ENCODE measurements at regions of chr5 and their contacts with region 1.

Region 1: GRCh38 chr5:55936100-55936693 is 58.6 kb downstream of the IL6ST start:
- DNase-seq: peak; percentile 86
- ATAC-seq: peak; percentile 79
- H3K4me3 Mint-ChIP-seq: no peak overlapping the region
- H3K27ac Mint-ChIP-seq: no peak overlapping the region
- H3K4me1 Mint-ChIP-seq: no peaks in the 10 kb centered on the region
- H3K27me3 Mint-ChIP-seq: no peaks in the 10 kb centered on the region
- CTCF ChIP-seq: peak; percentile 49; the same call in 1 of the 2 replicates

Region 2: DNA sequence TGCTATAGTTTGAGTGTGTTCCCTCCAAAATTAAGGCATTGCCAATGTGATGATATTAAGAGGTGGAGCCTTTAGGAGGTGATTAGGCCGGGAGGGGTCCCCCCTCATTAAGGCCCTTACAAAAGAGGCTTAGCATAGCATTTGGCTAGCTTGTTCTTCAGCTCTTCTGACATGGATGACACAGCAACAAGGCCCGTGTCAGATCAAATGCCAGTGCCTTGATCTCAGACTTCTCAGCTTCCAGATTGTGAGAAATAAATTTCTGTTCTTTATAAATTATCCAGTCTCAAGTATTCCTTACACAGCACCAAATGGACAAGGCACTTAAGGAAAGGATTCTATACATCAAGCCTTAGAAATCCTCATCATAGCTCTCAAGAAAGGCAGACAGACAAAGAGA is 255.8 kb before region 1 on chr5:
- CTCF ChIA-PET with region 1: no interaction called
- POLR2A ChIA-PET with region 1: no interaction called
- DNase-seq: no peak
- ATAC-seq: no peak
- H3K4me3 Mint-ChIP-seq: no peak overlapping the region
- H3K27ac Mint-ChIP-seq: peak overlapping the region; percentile 21; the same call in 1 of the 2 replicates
- H3K4me1 Mint-ChIP-seq: peaks cover 6% of the 10 kb centered on the region
- H3K27me3 Mint-ChIP-seq: no peaks in the 10 kb centered on the region
- CTCF ChIP-seq: no peak

Region 3: GRCh38 chr5:56200856-56201666 is 264.9 kb after region 1 on chr5:
- CTCF ChIA-PET with region 1: interaction called, 29 read pairs
- POLR2A ChIA-PET with region 1: no interaction called
- DNase-seq: peak; percentile 49
- ATAC-seq: peak; percentile 100
- H3K4me3 Mint-ChIP-seq: no peak overlapping the region
- H3K27ac Mint-ChIP-seq: no peak overlapping the region
- H3K4me1 Mint-ChIP-seq: no peaks in the 10 kb centered on the region
- H3K27me3 Mint-ChIP-seq: no peaks in the 10 kb centered on the region
- CTCF ChIP-seq: peak; percentile 17; the same call in 1 of the 2 replicates

Region 4: GRCh38 chr5:56264417-56265025 is 328.3 kb after region 1 on chr5:
- CTCF ChIA-PET with region 1: interaction called, 10 read pairs
- POLR2A ChIA-PET with region 1: no interaction called
- DNase-seq: peak; percentile 65
- ATAC-seq: peak; percentile 100
- H3K4me3 Mint-ChIP-seq: no peak overlapping the region
- H3K27ac Mint-ChIP-seq: no peak overlapping the region
- H3K4me1 Mint-ChIP-seq: peaks cover 5% of the 10 kb centered on the region; the same call in 1 of the 2 replicates
- H3K27me3 Mint-ChIP-seq: no peaks in the 10 kb centered on the region
- CTCF ChIP-seq: peak; percentile 63